ENCODE measurements at regions of chr1 and their contacts with region 1.

Region 1: GRCh38 chr1:24694380-24694843 is 50.8 kb upstream of the CLIC4 start:
- DNase-seq: no peak
- ATAC-seq: peak in 3 of 4 donors; percentile 28 to 39 (median 30)
- H3K4me3 ChIP-seq: no peak overlapping the region
- H3K27ac ChIP-seq: peak overlapping the region in 1 of 3 donors; percentile 21
- H3K4me1 ChIP-seq: no peaks in the 10 kb centered on the region
- H3K27me3 ChIP-seq: no peaks in the 10 kb centered on the region
- CTCF ChIP-seq: no peak
- POLR2A ChIP-seq: no peak

Region 2: DNA sequence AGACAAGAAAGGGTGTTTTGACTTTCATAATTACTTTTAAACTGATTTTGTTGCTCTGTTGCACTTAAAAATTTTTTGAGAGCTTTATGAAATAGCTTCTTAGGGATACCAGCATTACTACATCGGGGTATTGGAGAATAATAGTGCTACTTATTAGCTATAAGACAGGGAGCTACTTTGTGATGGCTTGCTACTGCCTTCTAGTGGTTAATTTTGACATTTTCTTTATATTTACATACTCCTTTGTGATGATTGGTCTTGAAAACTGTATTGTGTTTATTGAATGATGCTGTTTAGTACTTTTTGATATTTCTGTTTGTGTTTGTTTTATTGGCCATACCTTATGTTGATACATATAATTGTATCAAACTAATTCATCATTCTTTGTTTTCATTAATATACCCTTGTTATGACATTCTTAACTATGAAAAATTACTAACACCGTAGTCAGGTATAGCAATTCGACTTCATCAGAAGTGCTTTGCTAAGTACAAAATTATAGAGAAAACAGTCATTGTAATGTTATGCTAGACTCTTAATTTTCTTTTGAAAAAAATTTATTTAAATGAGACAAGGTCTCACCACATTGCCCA is 136.4 kb after region 1 on chr1:
- intact Hi-C with region 1: loop called in 1 of 2 experiments (anchors 5 kb)
- DNase-seq: no peak
- ATAC-seq: peak; percentile 82 to 92 (median 90)
- H3K4me3 ChIP-seq: no peak overlapping the region
- H3K27ac ChIP-seq: no peak overlapping the region
- H3K4me1 ChIP-seq: peaks cover 0 to 22% (median 0%) of the 10 kb centered on the region in 4 donors
- H3K27me3 ChIP-seq: no peaks in the 10 kb centered on the region
- CTCF ChIP-seq: peak; percentile 79 to 88 (median 84)
- POLR2A ChIP-seq: no peak